ENCODE measurements at regions of chr2 and their contacts with region 1.

Region 1: DNA sequence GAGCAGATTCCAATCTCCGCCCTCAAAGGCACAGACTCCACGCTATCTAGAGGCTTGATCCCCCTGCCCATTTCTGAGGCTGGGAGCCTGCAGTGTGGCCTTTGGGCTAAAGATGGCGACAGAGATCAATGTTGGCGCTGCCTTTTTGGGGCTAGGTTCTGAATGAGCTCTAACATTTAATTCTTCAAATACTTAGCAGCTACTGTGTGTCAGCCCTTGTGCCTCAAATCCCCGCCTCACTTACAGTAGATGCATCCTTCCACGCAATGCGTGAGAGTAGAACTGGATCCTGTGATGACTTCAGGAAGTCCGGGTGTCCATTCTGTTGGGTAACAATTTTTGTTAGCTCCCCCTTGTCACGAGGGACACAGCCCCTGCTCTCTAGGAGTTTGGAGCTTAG is 12.4 kb downstream of the IL1F10 start:
- DNase-seq: peak; percentile 15
- ATAC-seq: peak; percentile 78
- H3K4me3 ChIP-seq: no peak overlapping the region
- H3K27ac ChIP-seq: no peak overlapping the region
- H3K4me1 ChIP-seq: no peaks in the 10 kb centered on the region
- H3K27me3 ChIP-seq: peaks cover 7% of the 10 kb centered on the region; the same call in 1 of the 2 replicates
- CTCF ChIP-seq: peak; percentile 91

Region 2: DNA sequence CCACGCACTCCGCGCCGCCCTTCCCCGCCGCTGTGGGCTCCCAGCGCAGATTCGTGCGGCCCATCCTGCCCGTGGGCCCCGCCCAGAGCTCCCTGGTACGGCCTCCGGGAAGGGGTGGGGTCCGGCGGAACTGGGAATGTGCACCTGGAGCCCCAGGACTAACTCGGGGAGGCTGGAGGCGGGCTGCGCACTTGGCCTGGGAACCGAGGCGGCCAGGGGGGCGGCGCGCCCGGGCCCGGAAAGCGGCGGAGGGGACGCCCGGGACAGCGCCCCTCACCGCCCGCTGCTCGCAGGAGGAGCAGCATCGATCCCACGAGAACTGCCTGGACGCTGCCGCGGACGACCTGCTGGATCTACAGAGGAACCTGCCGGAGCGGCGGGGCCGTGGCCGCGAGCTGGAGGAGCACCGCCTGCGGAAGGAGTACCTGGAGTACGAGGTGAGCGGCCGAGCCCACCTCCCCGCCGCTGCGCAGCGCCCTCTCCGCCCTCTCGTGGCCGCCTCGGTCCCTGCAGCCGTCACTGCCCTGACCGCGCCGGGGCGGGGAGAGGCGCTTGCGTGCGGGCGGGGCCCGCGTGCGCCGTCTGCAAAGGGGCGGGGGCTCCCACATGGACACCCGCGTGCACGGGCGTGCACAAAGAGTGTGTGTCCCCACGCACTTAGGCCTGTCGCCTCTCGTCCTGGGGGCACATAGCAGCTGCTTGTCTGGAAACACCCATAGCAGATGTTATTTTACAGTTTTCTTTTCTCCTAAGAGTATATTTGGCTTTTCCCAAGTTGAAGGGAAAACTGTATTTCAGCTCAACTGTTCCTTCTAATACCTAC is 118.9 kb after region 1 on chr2:
- CTCF ChIA-PET with region 1: interaction called, 12 read pairs
- POLR2A ChIA-PET with region 1: no interaction called
- in situ Hi-C with region 1: no loop called
- intact Hi-C with region 1: loop called (anchors 5 kb)
- DNase-seq: no peak
- ATAC-seq: peak; percentile 92
- H3K4me3 ChIP-seq: peak overlapping the region; percentile 74 to 75
- H3K27ac ChIP-seq: peak overlapping the region; percentile 73
- H3K4me1 ChIP-seq: no peaks in the 10 kb centered on the region; the same call in 1 of the 2 replicates
- H3K27me3 ChIP-seq: no peaks in the 10 kb centered on the region
- CTCF ChIP-seq: peak; percentile 99

Measured in Panc1 (cell line).